K562 (cell line): ENCODE measurements at regions of chr11 and their contacts with region 1.

Region 1: DNA sequence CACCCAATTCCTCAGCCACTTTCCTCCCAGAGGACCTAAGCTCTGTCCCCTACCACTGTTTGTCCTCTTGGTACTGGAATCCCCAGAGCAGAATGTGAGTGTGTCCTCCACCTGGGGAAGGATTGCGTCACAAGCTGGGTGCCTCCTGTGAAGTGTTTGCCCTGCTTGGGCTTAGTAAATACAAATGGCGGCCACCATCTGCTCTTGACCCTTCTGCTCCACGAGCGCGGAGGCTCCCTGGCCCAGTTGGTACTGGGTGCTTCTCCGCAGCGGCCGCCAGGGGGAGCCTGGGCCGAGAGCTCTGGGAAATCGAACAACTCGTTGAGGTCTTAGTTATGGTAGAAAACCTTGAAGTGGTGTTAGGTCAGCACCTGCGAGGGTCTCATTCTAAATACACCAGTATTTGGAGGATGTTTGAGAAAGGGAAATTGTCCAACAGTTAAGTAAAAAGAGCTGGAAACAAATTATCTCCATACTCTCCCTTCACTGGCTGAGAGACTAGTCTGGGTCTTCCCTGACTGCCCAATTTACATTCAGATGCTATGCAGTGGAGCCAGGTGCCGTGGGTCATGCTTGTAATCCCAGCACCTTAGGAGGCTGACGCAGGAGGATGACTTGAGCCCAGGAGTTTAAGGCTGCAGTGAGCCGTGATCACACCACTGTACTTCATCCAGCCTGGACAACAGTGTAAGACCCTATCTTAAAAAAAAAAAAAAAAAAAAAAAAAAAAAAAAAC is 74.6 kb upstream of the TEAD1 start:
- DNase-seq: peak; percentile 62 to 80 (median 66)
- ATAC-seq: peak; percentile 93
- H3K4me3 ChIP-seq: no peak overlapping the region
- H3K27ac ChIP-seq: no peak overlapping the region; the same call in 2 of the 3 replicates
- H3K4me1 ChIP-seq: peaks cover 4 to 27% of the 10 kb centered on the region in 2 experiments
- H3K27me3 ChIP-seq: no peaks in the 10 kb centered on the region
- CTCF ChIP-seq: peak; percentile 81 to 93 (median 85)
- EP300 ChIP-seq: no peak
- POLR2A ChIP-seq: no peak
- RAD21 ChIP-seq: peak; percentile 67 to 87

Region 2: DNA sequence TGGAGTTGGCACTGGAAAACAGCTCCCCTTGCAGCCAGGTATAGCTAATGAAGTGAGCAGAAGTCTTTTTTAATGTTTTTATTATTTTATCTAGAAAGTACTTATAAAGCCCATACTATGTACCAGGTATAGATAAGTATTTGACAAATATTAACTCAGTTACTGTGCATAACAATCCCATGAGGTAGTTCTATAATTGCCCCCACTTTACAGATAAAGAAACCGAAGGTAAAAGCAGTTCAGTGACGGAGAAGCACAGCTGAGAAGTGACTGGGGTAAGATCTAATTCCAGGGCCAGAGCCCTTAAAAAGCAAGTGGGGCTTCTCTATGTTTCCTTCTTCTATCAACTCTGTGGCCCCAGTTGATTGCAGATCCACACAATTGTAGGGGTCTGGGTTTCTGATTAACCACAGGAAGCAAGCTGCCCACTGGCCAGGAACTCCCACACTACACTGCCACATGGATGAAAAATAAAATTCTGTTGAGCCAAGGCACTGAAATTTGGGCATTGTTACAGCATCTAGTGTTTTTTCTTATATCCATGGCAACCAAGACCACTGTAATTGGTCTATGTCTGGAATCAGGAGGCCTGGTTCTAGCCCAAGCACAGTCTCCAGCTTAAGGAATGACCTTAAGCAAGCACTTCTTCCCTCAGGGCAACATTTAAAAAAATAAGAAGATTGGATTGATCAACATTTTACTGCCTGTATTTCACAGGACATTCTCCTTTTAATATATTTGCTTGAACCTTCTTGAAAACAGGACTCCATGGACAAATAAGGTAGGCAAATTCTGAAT is 19.4 kb after region 1 on chr11:
- CTCF ChIA-PET with region 1: no interaction called
- POLR2A ChIA-PET with region 1: no interaction called
- in situ Hi-C with region 1: no loop called
- intact Hi-C with region 1: no loop called
- DNase-seq: no peak
- ATAC-seq: no peak
- H3K4me3 ChIP-seq: no peak overlapping the region
- H3K27ac ChIP-seq: no peak overlapping the region
- H3K4me1 ChIP-seq: no peaks in the 10 kb centered on the region
- H3K27me3 ChIP-seq: no peaks in the 10 kb centered on the region
- CTCF ChIP-seq: no peak
- EP300 ChIP-seq: no peak
- POLR2A ChIP-seq: no peak
- RAD21 ChIP-seq: no peak

Region 3: DNA sequence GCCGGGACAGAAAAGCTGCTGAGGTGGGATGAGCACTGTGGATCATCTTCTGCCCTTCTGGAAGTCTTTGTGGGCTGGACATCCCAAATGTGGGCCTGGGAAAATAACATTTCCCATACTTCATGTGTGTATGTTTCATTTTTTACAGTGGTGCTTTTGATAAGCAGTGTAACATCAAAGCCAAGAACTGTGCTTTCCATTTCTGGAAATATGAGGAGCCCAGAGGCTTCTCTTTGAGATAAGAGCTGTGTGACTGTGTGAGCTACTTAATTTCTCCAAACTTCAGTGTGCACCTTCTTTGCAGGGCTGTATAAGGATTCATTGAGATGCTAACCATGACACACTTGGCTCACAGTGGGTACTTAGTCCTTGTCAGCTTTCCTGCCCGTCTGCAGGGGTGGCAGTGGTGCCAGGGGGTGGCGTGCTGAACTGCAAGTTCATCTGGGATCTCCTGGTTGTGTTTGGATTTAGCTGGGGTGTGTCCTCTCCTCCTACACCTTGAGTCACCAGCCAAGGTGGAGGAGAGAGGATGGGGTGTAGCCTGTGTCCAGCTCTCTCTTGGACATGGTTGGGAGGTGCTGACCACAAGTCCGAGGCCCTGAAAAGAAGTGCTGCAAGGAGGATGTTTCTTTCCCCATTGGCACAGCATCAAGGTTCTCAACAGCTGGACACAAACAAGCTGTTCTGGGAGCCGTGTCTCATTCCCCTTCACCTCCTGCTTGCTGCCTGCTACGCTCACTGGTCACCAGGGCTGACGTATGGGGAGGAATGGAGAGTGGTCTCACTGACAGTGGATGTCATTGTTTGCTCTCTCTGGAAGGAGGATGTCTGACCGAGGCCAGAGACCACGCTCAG is 214.0 kb after region 1 on chr11:
- CTCF ChIA-PET with region 1: interaction called, 3 read pairs
- POLR2A ChIA-PET with region 1: no interaction called
- in situ Hi-C with region 1: no loop called
- intact Hi-C with region 1: loop called (anchors 5 kb)
- DNase-seq: peak; percentile 16 to 54 (median 34)
- ATAC-seq: peak; percentile 15
- H3K4me3 ChIP-seq: no peak overlapping the region
- H3K27ac ChIP-seq: 0 out of 3 replicates have a peak overlapping the region, but pooled peaks have one; percentile 0
- H3K4me1 ChIP-seq: peaks cover 31 to 58% of the 10 kb centered on the region in 2 experiments
- H3K27me3 ChIP-seq: no peaks in the 10 kb centered on the region
- CTCF ChIP-seq: no peak
- EP300 ChIP-seq: no peak
- POLR2A ChIP-seq: no peak
- RAD21 ChIP-seq: 0 out of 4 replicates have a peak, but pooled peaks of 1 of the 2 experiments have one; percentile 1

Region 4: GRCh38 chr11:13661074-13661623 is 1061.6 kb after region 1 on chr11:
- CTCF ChIA-PET with region 1: no interaction called
- POLR2A ChIA-PET with region 1: no interaction called
- in situ Hi-C with region 1: no loop called
- intact Hi-C with region 1: no loop called
- DNase-seq: no peak
- ATAC-seq: no peak
- H3K4me3 ChIP-seq: no peak overlapping the region
- H3K27ac ChIP-seq: no peak overlapping the region
- H3K4me1 ChIP-seq: no peaks in the 10 kb centered on the region
- H3K27me3 ChIP-seq: no peaks in the 10 kb centered on the region
- CTCF ChIP-seq: no peak
- EP300 ChIP-seq: no peak
- POLR2A ChIP-seq: no peak
- RAD21 ChIP-seq: no peak